A549 (cell line): ENCODE measurements at regions of chr17 and their contacts with region 1.

Region 1: GRCh38 chr17:38711792-38712571 is 6.9 kb downstream of the MLLT6 start:
- DNase-seq: no peak
- ATAC-seq: no peak
- H3K4me3 ChIP-seq: no peak overlapping the region
- H3K27ac ChIP-seq: no peak overlapping the region
- H3K4me1 ChIP-seq: peaks cover 8% of the 10 kb centered on the region; the same call in 2 of the 3 replicates
- CTCF ChIP-seq: no peak
- EP300 ChIP-seq: no peak
- POLR2A ChIP-seq: no peak
- RAD21 ChIP-seq: no peak

Region 2: DNA sequence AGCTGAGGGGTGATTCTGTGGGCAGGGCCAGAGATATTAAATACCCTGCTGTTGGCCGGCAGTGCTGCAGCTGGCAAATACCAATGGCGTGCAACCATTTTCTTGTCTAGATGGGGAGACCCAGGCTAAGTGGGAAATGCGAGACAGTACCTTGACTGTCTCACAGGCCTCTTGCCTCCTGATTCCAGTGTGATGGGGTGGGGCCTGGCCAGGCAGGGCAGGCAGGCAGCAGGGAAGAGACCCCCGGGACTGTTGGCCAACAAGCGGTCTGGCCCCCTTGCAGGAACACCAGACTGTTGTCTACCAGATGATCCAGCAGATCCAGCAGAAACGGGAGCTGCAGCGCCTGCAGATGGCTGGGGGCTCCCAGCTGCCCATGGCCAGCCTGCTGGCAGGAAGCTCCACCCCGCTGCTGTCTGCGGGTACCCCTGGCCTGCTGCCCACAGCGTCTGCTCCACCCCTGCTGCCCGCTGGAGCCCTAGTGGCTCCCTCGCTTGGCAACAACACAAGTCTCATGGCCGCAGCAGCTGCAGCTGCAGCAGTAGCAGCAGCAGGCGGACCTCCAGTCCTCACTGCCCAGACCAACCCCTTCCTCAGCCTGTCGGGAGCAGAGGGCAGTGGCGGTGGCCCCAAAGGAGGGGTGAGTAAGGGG is 12.5 kb after region 1 on chr17:
- CTCF ChIA-PET with region 1: interaction called, 18 read pairs
- POLR2A ChIA-PET with region 1: interaction called, 4 read pairs
- DNase-seq: no peak
- ATAC-seq: no peak
- H3K4me3 ChIP-seq: no peak overlapping the region
- H3K27ac ChIP-seq: no peak overlapping the region
- H3K4me1 ChIP-seq: peaks cover 9% of the 10 kb centered on the region; the same call in 2 of the 3 replicates
- CTCF ChIP-seq: no peak
- EP300 ChIP-seq: no peak
- POLR2A ChIP-seq: no peak
- RAD21 ChIP-seq: no peak